Right ventricle myocardium inferior (tissue), 1 donor: ENCODE measurements at regions of chr10 and their contacts with region 1.

Region 1: DNA sequence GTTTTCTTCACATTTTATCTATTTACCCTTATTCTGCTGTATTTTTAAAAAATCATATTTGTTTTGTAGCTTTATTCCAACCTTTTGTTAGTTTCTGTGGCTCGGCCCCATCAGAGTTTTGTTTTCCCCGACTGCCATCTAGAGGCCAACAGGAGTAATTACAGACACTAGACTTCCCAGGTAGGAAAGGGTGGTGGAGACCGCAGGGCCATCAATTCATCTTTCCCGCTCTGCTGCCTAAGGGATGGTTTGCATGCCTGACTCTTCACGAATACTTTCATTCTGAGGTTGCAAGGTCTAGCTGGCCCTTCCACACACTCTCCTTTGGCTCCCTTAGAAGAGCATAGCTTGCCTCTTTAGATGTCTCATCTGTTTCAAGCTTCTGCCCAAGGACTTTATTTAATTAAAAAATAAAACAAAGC is 38.3 kb downstream of the LYZL2 start:
- DNase-seq: no peak
- ATAC-seq: peak; percentile 51

Region 2: GRCh38 chr10:30392564-30392990 is 198.7 kb before region 1 on chr10:
- intact Hi-C with region 1: loop called (anchors 2 kb)
- DNase-seq: peak; percentile 91
- ATAC-seq: peak; percentile 98

Region 3: GRCh38 chr10:30413996-30414576 is 177.2 kb before region 1 on chr10:
- intact Hi-C with region 1: loop called (anchors 5 kb)
- DNase-seq: no peak
- ATAC-seq: peak; percentile 79

Region 4: GRCh38 chr10:30734901-30735300 is 143.6 kb after region 1 on chr10:
- intact Hi-C with region 1: no loop called
- DNase-seq: no peak
- ATAC-seq: no peak